Left cardiac atrium (tissue), 4 donors: ENCODE measurements at regions of chr6 and their contacts with region 1.

Region 1: GRCh38 chr6:131694831-131695426 is 6.3 kb downstream of the OR2A4 start:
- DNase-seq: peak; percentile 29
- ATAC-seq: peak; percentile 85 to 94

Region 2: GRCh38 chr6:131717832-131718542 is 23.1 kb after region 1 on chr6:
- intact Hi-C with region 1: no loop called
- DNase-seq: no peak
- ATAC-seq: no peak

Region 3: DNA sequence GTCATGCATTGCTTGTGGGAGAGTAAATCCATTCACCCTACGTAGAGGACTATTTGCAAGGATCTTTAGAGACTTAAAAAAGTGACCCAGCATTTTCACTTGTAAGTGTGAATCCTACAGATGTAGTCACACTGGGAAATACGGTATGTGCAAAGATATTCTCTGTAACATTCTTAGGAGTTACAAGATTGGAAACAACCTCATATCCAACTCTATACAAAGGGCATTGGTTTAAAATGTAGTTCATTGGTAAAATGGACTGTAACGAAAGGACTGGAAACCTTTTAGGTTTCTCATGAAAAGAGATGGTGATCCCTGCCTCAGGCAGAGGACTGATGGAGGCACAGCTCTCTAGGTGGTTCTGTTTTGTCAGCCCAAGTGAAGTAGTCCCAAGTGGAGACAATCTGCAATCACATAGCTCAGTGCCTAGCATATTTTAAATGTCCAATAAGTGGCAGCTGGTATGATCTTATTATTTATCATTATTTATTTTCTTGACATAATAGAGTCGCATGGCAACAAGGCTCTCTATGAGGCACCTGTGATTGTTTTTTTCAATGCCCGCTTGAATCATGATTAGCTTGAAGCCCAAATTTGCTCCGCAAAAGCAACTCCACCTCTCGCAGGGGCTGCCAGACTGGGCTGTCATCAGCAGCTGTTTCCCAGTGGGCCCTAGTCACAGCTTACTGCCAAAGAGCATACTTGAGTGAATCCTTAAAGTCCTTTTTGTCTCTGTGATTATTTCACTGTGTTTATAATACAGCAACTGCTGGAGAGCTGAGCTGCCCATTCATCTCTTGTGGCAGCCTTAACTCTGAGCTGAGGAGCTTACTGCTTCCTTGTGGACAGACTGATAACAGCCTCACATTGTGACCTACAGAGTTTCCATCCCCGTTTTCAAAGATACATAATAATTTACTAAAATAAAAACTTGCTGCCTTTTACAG is 93.1 kb after region 1 on chr6:
- intact Hi-C with region 1: loop called (anchors 10 kb)
- DNase-seq: no peak
- ATAC-seq: peak; percentile 44 to 61

Region 4: DNA sequence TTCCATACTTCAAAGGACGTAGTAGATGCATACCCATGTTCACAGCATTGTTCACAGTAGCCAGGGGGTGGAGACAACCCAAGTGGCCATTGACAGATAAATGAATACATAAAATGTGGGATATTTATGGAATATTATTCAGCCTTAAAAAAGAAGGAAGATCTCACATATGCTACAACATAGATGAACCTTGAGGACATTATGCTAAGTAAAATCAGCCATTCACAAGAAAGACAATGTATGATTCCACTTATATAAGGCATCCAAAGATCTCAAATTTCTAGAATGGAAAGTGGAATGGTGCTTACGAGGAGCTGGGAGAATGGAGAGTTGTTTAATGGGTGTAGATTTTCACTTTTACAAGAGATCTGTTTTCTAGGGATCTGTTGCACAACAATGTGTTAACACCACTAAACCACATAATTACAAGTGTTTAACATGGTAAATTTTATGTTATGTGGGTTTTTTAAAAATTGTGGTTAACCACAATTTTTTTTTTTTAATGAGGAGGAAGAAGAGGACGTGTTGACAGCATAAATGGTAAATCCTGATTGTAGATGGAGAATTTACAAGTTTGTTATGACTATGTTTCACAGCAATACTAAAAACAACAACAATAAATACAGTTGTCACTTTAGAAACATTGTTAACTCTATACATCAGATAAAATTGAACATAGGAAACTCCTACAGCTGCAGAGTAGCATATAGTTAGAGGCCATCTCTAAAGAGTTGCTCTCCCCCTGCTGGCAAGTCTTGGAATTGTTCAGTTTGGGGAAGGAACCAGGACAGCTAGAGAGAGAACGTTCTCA is 214.7 kb after region 1 on chr6:
- intact Hi-C with region 1: loop called in 1 of 2 experiments (anchors 5 kb)
- DNase-seq: peak; percentile 63
- ATAC-seq: peak; percentile 77 to 79